Gastrocnemius medialis (tissue), 4 donors: ENCODE measurements at regions of chrX and their contacts with region 1.

Region 1: DNA sequence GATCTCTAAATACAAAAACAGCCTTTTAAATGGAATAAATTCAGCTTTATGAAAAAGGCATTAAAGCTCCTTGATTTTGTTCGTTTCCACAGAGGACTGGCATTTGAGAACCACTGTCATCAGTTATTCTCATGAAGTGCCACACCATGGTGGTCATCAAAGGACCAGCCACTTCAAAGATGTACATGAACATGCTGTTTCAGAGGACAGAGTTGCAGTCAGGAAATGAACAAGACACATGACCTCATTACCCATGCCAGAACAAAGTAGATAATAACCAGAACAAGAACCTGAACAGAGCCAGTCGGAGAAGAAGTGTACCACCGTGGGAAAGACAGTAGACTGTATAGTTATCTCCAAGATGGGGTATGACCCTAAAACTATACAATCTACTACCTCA is 122.7 kb upstream of the HSD17B10 start:
- DNase-seq: no peak
- ATAC-seq: no peak
- H3K4me3 ChIP-seq: no peak overlapping the region
- H3K27ac ChIP-seq: no peak overlapping the region
- H3K4me1 ChIP-seq: no peaks in the 10 kb centered on the region
- H3K27me3 ChIP-seq: no peaks in the 10 kb centered on the region
- CTCF ChIP-seq: no peak
- POLR2A ChIP-seq: no peak

Region 2: GRCh38 chrX:53599781-53600396 is 43.0 kb after region 1 on chrX:
- in situ Hi-C with region 1: no loop called
- intact Hi-C with region 1: loop called (anchors 10 kb)
- DNase-seq: no peak
- ATAC-seq: no peak
- H3K4me3 ChIP-seq: no peak overlapping the region
- H3K27ac ChIP-seq: no peak overlapping the region
- H3K4me1 ChIP-seq: no peaks in the 10 kb centered on the region
- H3K27me3 ChIP-seq: no peaks in the 10 kb centered on the region
- CTCF ChIP-seq: no peak
- POLR2A ChIP-seq: no peak

Region 3: GRCh38 chrX:53621418-53621986 is 64.6 kb after region 1 on chrX:
- in situ Hi-C with region 1: loop called in 1 of 4 experiments (anchors 10 kb)
- intact Hi-C with region 1: no loop called
- DNase-seq: no peak
- ATAC-seq: no peak
- H3K4me3 ChIP-seq: no peak overlapping the region
- H3K27ac ChIP-seq: no peak overlapping the region
- H3K4me1 ChIP-seq: no peaks in the 10 kb centered on the region
- H3K27me3 ChIP-seq: no peaks in the 10 kb centered on the region
- CTCF ChIP-seq: no peak
- POLR2A ChIP-seq: no peak